ENCODE measurements at regions of chr15 and their contacts with region 1.

Region 1: GRCh38 chr15:88657326-88658069 is 18.7 kb downstream of the ISG20 start:
- DNase-seq: peak; percentile 59
- H3K4me3 Mint-ChIP-seq: no peak overlapping the region
- H3K27ac Mint-ChIP-seq: no peak overlapping the region
- H3K4me1 Mint-ChIP-seq: peaks cover 34% of the 10 kb centered on the region
- H3K27me3 Mint-ChIP-seq: no peaks in the 10 kb centered on the region
- CTCF ChIP-seq: peak; percentile 95

Region 2: DNA sequence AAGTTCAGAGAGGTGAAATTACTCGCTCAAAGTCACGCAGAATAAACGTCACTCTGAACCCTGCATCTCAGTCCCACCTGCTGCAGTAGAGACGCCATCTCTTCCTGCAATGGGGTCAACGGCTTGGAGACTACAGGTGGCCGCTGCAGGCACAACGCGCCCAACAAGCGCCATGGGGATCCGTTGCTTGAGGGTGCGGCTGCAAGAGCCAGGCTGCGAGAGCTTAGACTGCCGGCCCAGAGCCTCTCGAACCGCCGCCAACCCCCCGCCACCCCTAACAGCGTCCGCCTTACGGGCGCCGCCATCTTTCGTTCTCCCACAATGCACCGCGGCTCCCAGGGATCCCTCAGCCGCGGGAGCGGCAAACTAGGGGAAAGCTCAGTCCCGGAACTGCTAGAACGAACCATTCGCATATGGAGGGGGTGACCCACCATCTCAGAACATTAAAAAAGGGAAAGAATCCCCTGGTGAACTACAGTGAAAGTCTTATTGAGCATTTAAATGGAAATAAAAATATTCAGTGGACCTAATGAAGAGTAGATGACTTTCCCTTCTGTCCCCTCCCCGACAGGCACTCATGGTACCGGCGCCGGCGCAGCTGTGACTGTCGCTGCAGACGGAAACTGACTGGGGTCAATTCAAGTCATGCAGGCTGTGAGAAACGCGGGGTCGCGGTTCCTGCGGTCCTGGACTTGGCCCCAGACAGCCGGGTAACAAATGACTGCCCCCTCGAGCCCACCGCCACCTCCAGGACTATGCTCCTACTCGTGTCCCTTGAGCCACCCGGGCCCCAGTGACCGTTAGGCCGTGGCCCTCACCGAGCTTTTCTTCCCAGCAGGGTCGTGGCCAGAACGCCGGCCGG is 190.2 kb before region 1 on chr15 and contains the starts of genes MRPL46 and MRPS11:
- CTCF ChIA-PET with region 1: no interaction called
- intact Hi-C with region 1: no loop called
- DNase-seq: peak; percentile 93
- H3K4me3 Mint-ChIP-seq: peak within 1 kb of the TSS; percentile 86
- H3K27ac Mint-ChIP-seq: peak within 1 kb of the TSS; percentile 93
- H3K4me1 Mint-ChIP-seq: peaks cover 12% of the 10 kb centered on the region
- H3K27me3 Mint-ChIP-seq: no peaks in the 10 kb centered on the region
- CTCF ChIP-seq: no peak
- total RNA-seq, gene MRPL46: 47.6 and 53.8 TPM in 2 replicates
- total RNA-seq, gene MRPS11: 66.6 and 75.6 TPM in 2 replicates

Region 3: DNA sequence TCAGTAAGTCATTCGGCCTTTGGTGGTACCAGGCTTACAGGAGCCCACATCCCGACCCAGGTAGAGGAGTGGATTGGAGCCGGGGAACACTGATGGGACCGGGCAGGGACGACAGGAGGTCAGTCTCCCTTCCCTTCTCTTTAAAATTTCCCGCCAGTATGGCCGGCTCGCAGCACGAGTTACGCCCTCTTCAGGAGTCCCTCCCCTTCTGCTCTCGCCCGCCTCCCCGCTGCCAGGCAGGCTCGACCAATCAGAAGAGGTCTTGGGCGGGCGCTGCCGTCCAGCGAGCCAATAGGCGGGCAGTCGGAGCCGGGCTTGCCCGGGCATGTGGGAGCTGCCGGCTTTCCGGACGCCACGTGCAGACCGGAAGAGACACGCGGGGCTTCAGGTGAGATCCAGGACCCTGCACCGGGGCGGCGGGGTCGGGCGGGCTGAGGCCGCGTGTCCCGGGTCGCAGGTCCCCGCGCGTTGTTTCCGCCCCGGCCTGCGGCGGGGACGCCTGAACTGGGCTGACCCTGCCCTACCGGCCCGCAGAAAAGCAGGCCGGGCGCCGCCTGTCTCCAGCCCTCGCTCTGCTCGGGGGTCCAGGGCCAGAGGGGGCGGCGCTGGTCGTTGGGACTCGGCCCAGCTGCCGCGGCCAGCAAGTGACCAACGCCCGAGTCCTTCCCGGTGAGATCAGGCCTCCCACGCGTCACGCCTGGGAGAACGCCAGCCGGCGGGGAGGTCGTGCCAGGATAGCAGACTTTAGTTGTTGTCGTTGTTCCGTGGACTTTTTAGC is 36.3 kb before region 1 on chr15 and contains the start of gene AEN:
- CTCF ChIA-PET with region 1: interaction called, 5 read pairs
- intact Hi-C with region 1: loop called (anchors 5 kb)
- DNase-seq: peak; percentile 98
- H3K4me3 Mint-ChIP-seq: peak within 1 kb of the TSS; percentile 85
- H3K27ac Mint-ChIP-seq: peak within 1 kb of the TSS; percentile 91
- H3K4me1 Mint-ChIP-seq: peaks cover 28% of the 10 kb centered on the region
- H3K27me3 Mint-ChIP-seq: no peaks in the 10 kb centered on the region
- CTCF ChIP-seq: no peak
- total RNA-seq, gene AEN: 34.9 and 43.4 TPM in 2 replicates

Region 4: GRCh38 chr15:88638626-88639372 is 18.7 kb before region 1 on chr15 and contains the start of gene ISG20:
- CTCF ChIA-PET with region 1: interaction called, 5 read pairs
- intact Hi-C with region 1: loop called (anchors 1 kb)
- DNase-seq: peak; percentile 98
- H3K4me3 Mint-ChIP-seq: peak within 1 kb of the TSS; percentile 76
- H3K27ac Mint-ChIP-seq: peak within 1 kb of the TSS; percentile 93
- H3K4me1 Mint-ChIP-seq: peaks cover 49% of the 10 kb centered on the region
- H3K27me3 Mint-ChIP-seq: no peaks in the 10 kb centered on the region
- CTCF ChIP-seq: no peak
- total RNA-seq, gene ISG20: 75.6 and 155 TPM in 2 replicates

Region 5: GRCh38 chr15:88701561-88702095 is 44.1 kb after region 1 on chr15:
- CTCF ChIA-PET with region 1: no interaction called
- intact Hi-C with region 1: loop called (anchors 2 kb)
- DNase-seq: peak; percentile 63
- H3K4me3 Mint-ChIP-seq: no peak overlapping the region
- H3K27ac Mint-ChIP-seq: no peak overlapping the region
- H3K4me1 Mint-ChIP-seq: no peaks in the 10 kb centered on the region
- H3K27me3 Mint-ChIP-seq: peaks cover 96% of the 10 kb centered on the region
- CTCF ChIP-seq: peak; percentile 68

Region 6: GRCh38 chr15:88834211-88834812 is 176.8 kb after region 1 on chr15:
- CTCF ChIA-PET with region 1: interaction called, 3 read pairs
- intact Hi-C with region 1: loop called (anchors 1 kb)
- DNase-seq: peak; percentile 55
- H3K4me3 Mint-ChIP-seq: no peak overlapping the region
- H3K27ac Mint-ChIP-seq: no peak overlapping the region
- H3K4me1 Mint-ChIP-seq: no peaks in the 10 kb centered on the region
- H3K27me3 Mint-ChIP-seq: peaks cover 51% of the 10 kb centered on the region
- CTCF ChIP-seq: peak; percentile 69

Region 7: DNA sequence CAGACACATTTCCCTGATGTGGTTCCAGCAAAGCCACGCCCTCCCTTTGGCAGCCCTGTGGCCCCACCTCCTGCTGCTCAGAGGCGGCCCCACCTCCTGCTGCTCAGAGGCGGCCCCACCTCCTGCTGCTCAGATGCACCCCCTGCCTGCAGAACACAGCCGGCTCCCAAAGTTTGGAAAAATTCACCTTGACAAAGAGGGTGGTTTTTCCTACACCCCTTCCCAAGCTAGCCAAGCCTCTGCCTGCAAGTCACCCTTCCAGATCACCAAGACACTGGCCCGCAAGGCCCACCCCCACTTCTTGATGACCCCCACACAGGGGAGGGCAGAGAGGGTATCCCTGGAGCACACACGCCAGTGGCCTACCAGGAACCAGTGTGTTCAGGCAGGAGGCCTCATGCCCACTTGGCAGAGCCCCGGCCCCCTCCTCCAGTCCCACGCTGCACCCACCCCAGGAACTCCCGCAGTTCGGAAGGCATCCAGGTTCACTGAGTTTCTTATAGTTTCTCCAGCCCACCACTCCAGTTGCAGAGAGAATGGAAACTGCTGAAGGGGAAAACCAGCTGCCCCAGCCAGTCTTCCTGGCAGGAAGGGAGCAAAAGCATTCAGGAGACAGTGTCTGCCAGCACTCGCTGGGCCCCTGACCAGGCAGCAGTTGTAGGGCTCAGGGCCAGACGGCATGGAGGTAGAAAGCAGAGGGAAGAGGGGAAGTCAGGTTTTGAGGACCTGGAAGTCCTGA is 240.1 kb after region 1 on chr15:
- CTCF ChIA-PET with region 1: interaction called, 3 read pairs
- intact Hi-C with region 1: loop called (anchors 5 kb)
- DNase-seq: peak; percentile 95
- H3K4me3 Mint-ChIP-seq: no peak overlapping the region
- H3K27ac Mint-ChIP-seq: no peak overlapping the region
- H3K4me1 Mint-ChIP-seq: peaks cover 29% of the 10 kb centered on the region
- H3K27me3 Mint-ChIP-seq: peaks cover 12% of the 10 kb centered on the region
- CTCF ChIP-seq: peak; percentile 60